ENCODE measurements at regions of chr10 and their contacts with region 1.

Region 1: DNA sequence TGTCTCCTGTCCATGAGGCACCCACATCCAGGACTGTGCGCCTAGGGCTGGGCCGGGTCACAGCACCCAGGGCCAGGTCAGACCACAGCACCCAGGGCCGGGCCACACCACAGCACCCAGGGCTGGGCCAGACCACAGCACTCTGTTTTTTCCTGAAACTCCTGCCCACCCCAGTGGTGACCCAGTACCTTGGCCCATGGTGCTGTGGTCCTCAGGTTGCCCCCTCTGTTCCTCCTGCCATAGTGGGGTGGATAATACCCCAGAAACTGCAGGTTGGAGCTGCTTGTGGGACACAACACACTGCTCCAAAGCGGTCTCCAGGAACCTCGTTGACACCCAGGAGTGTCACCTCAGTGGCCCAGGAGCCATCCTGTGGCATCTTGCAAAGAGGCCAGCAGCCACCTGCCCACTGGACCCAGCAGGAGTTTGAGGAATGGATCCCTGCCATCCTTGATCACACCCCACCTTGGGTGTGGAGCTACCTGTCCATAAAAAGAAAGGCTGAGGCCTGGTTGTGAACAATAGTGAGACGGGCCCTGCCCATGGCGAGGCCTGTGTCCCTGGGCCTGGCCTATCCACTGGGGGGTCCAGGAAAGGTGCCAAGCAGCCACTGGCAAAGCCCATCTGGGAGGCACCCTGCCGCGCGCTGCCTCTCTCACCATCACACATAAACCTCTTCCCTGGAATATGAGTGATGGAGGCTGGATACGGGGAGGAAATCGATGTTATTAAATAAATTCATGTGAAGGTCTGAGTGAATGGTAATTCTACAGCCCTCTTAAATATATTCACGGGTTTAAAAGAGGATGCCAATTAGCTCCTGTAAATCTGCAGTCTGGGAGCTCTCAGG is 89.0 kb downstream of the NKX6-2 start:
- DNase-seq: no peak
- ATAC-seq: peak in 2 of 8 donors; percentile 15 to 28
- H3K4me3 ChIP-seq: no peak overlapping the region
- H3K27ac ChIP-seq: no peak overlapping the region
- H3K4me1 ChIP-seq: peaks cover 0 to 18% (median 10%) of the 10 kb centered on the region in 9 donors
- H3K27me3 ChIP-seq: no peaks in the 10 kb centered on the region
- CTCF ChIP-seq: no peak

Region 2: GRCh38 chr10:131193923-131194322 is 1503.0 kb before region 1 on chr10:
- intact Hi-C with region 1: loop called in 1 of 10 experiments (anchors 5 kb)
- DNase-seq: no peak
- ATAC-seq: no peak
- H3K4me3 ChIP-seq: no peak overlapping the region
- H3K27ac ChIP-seq: no peak overlapping the region
- H3K4me1 ChIP-seq: no peaks in the 10 kb centered on the region
- H3K27me3 ChIP-seq: peaks cover 0 to 20% (median 4%) of the 10 kb centered on the region in 7 donors
- CTCF ChIP-seq: no peak

Region 3: DNA sequence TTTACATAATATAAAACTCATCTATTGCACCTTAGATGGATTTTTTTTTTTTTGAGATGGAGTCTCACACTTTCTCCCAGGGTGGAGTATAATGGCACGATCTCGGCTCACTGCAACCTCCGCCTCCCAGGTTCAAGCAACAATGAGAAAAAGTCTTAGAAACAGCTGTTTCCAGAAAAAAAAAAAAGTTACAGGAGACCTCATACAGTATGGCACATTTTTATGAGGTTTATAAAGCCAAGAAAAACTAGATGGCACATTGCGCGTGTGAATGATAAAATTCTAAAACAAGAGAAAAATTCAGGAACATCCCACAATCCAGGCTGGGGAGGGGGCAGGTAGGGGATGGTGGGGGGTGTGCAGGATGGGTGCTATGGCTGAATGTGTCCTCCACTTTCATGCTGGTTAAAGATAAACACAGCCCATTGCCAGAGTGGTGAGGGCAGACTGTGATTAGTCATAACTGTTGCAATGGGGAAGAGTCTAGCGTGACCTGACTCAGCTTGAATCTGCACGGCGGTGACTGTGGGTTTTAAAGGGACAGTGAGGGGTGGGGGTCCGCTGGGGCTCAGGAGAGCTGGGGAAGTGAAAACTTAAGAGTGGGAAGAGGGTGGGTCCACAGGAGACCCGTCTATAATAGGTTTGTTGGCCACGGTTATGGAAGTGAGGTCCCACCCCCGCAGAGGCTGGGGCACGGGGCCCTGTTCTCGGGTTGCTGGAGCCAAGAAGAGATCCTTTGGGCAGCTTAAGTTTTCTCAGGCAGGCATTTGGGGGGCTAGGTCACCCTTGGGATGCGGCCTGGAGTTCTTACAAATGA is 376.9 kb before region 1 on chr10:
- intact Hi-C with region 1: no loop called
- DNase-seq: no peak
- ATAC-seq: peak in 3 of 8 donors; percentile 29 to 83 (median 34)
- H3K4me3 ChIP-seq: no peak overlapping the region
- H3K27ac ChIP-seq: peak overlapping the region in 1 of 10 donors; percentile 37
- H3K4me1 ChIP-seq: peaks cover 0 to 26% (median 0%) of the 10 kb centered on the region in 9 donors
- H3K27me3 ChIP-seq: no peaks in the 10 kb centered on the region
- CTCF ChIP-seq: no peak

Region 4: DNA sequence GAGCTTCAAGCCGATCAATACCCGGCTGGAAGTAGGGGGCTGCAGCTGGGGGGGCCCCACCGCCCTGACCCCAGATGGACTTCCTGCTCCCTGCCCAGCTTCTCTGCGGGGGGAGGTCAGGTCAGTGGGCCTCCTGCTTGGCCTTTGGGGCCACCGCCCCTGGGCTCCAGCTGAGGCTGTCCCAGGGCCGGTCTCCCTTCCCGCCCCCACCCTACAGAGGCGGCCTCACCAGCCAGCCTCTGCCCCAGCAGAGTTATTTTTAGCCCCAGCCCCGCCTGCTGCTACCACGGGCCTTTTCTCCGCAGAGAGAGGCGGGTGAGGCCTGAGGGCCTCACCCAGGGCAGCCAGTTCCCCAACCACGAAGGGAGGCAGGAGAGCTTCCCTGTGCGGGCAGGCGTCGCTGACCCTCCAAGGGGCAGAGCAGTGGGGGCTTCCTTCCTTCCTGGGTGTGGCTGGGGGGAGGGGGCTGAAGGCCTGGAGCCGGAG is 275.5 kb before region 1 on chr10:
- intact Hi-C with region 1: no loop called
- DNase-seq: peak; percentile 77 to 79
- ATAC-seq: peak; percentile 87 to 94 (median 90)
- H3K4me3 ChIP-seq: peak overlapping the region in 6 of 10 donors; percentile 13 to 28 (median 18)
- H3K27ac ChIP-seq: peak overlapping the region; percentile 75 to 94 (median 88)
- H3K4me1 ChIP-seq: peaks cover 23 to 68% (median 43%) of the 10 kb centered on the region in 9 donors
- H3K27me3 ChIP-seq: no peaks in the 10 kb centered on the region
- CTCF ChIP-seq: no peak

Region 5: DNA sequence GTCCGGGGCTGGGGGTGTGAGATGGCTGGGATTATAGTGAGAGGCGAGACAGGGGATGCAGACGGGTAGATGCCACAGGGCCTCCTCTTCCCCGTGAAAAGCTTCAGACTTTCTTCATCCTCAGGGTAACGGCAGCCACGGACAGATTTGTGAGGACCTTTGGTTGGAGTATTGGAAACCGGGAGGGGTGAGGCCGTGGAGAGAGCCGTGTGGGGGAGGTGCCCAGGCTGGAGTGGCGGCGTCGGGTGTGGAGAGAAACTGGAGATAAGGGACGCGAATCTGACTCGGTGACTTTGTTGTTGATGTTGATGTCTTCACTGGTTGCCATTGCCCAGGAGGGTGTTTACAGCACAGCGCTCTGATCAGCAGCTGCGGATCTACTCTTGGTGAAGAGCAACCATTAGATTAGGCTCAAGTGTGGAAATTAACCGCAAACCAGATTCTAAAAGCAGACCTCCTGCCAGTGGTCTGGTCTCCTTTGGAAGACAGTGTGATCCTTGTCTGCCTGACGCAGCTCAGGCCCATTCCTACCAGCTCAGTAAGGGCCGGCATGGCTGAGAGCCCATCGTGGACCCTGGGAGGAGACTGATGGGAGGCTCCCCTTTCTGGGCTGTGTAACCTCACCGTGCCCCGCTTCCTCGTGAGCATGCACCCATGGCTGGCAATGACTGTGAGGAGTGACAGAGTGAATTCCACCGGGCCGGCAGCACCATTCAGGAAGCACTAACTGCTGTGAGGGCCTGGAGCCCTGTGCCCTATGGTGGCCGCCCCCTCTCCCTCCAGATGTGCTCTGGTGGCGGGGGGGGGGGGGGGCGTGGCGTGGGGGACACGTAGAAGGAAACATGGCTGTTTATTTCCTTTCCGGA is 69.1 kb before region 1 on chr10:
- intact Hi-C with region 1: no loop called
- DNase-seq: peak; percentile 53 to 55
- ATAC-seq: peak; percentile 5 to 37 (median 16)
- H3K4me3 ChIP-seq: peak overlapping the region in 6 of 10 donors; percentile 10 to 35 (median 28)
- H3K27ac ChIP-seq: peak overlapping the region; percentile 76 to 97 (median 86)
- H3K4me1 ChIP-seq: peaks cover 49 to 81% (median 73%) of the 10 kb centered on the region in 9 donors
- H3K27me3 ChIP-seq: no peaks in the 10 kb centered on the region
- CTCF ChIP-seq: no peak